Sciatic nerve (tissue), 2 donors: ENCODE measurements at regions of chr2 and their contacts with region 1.

Region 1: DNA sequence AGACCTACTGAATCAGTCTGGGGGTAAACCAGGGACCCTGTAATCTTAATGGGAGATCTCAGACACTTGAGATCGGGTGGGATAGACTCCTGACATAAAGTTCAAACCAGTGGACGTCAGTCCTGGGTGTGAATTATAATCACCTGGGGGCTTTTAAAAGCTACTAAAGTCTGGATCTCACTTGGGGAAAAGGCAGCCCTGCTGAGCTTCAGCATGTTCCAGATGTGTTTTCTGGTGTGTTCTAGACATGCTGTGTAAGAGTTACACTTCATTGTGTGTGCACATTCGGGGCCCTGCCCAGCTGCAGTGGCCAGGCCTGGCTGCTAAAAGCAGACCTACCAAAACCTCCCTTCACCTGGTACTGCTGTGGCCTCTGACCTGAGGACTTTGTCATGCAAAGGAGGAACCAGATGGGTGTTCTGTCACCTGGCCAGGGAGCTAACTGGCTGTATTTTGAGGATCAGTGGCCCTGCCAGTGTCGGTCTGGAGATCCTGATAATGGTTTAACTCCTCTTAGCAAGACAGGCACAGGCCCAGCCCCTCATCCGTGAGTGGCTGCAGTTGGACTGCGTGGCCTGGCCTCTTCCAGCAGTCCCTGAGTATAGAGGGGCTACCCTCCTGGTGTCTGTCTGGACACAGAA is 10.6 kb downstream of the RRM2 start:
- DNase-seq: no peak
- ATAC-seq: no peak

Region 2: GRCh38 chr2:11567631-11568031 is 1434.5 kb after region 1 on chr2:
- intact Hi-C with region 1: loop called (anchors 5 kb)
- DNase-seq: peak; percentile 42
- ATAC-seq: no peak